Vagina (tissue), 2 donors: ENCODE measurements at regions of chr7 and their contacts with region 1.

Region 1: DNA sequence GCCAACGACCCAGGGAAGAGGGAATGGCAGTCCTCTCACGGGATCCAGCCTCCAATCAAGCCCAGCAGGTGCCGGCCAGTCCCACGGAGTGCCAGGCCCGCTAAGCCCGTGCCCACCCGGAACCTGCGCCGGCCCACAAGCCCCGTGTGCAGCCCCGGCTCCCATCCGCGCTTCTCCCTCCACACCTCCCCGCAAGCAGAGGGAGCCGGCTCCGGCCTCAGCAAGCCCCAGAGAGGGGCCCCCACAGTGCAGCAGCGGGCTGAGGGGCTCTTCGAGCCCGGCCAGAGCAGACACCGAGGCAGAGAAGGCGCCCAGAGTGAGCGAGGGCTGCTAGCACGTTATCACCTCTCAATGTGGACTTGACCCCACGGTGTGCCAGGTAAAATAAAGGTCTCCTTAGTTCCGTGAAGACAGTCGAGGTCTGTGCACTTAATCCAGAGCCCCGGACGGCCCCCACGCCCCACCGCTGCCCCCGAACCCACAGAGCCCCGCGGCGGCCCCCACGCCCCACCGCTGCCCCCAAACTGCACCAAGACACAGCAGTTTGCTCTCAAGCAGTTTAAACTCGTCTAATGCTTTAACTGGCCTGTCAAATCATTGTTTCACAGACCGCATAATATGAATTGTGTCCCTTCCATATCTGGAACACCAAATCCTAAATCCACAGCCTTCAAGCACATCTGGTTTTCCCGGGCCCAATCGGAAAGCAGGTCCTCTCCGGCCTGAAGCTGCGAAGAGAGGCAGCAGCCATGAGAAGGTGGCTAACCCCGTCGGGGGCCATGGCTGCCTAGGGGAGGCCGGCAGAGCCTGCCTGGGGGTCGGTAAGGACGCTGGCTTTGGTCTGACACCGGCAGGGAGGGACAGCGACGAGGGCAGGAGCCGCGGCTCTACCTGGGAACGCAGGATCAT is 307.8 kb downstream of the PTPRN2 start:
- DNase-seq: no peak
- H3K4me3 ChIP-seq: no peak overlapping the region
- H3K27ac ChIP-seq: no peak overlapping the region
- H3K4me1 ChIP-seq: no peaks in the 10 kb centered on the region
- H3K27me3 ChIP-seq: no peaks in the 10 kb centered on the region
- CTCF ChIP-seq: no peak
- POLR2A ChIP-seq: no peak

Region 2: DNA sequence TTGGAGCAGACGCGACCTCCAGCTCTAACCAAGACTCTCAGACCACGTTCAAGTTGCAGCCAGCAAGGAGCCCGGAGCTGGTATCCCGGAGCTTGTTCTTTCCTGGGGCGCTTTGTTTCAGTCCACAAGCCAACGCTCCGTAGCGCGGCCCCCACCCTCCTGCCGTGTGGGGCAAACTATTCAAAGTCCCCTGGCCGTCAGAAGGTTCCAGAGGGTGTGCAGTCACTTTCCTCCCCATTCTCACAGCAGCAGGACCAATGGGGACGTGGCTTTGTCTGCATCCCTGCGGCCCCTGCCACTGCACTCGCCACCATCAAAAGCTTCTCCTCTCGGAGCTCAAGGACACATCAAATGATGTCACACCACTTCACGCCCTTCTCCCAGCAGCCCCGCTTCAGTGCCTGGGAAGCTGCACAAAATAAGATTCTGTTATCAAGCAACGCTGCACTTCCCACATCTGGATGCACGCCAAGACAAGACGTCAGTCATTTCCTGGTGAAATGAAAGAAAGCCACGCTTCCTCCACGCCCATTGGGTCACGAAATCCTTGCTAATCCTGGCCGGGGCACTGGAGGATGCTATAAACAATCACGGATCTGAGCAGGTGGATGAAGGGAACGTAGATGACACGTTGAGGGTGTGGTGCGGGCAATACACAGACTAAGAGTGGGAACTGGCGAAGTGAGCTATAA is 40.4 kb before region 1 on chr7:
- intact Hi-C with region 1: no loop called
- DNase-seq: no peak
- H3K4me3 ChIP-seq: no peak overlapping the region
- H3K27ac ChIP-seq: no peak overlapping the region
- H3K4me1 ChIP-seq: no peaks in the 10 kb centered on the region
- H3K27me3 ChIP-seq: no peaks in the 10 kb centered on the region
- CTCF ChIP-seq: no peak
- POLR2A ChIP-seq: no peak

Region 3: GRCh38 chr7:158252072-158252836 is 27.5 kb before region 1 on chr7:
- intact Hi-C with region 1: no loop called
- DNase-seq: peak in 1 of 2 donors; percentile 95
- H3K4me3 ChIP-seq: no peak overlapping the region
- H3K27ac ChIP-seq: no peak overlapping the region
- H3K4me1 ChIP-seq: no peaks in the 10 kb centered on the region
- H3K27me3 ChIP-seq: no peaks in the 10 kb centered on the region
- CTCF ChIP-seq: no peak
- POLR2A ChIP-seq: no peak

Region 4: DNA sequence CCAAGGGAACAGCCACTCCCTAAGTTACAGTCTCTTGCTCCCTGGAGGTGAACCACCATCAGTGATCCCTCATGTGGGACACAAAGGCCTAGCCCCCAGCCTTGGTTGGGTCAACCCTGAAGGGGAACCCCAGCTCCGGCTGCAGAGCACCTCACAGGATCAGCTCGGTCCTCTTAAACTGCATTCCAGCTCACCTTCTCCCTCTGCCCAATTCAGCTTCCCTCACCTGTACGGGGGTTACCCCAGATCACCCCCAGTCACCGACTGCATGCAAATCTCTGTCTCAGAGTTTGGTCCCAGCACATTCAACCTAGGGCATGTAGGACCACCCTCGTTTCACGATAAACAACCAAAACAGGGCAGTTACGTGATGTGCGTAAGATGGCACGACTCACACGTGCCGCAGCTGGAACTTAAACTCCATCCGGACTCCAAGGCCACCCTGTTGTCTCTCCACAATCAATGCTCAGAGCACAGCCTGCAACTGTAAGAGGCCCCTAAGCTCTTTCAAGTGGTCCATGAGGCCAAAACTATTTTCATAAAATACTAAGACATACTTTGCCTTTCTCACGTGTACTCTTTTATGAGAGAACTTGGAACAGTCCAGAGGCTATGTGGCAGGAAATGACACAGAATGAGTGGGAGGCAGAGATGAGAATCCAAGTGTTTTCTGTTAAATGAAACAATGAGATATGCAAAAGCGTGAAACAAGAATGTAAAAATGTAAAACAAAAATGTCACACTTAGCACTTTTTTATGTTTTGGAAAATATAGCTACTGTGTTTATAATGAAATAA is 22.7 kb after region 1 on chr7:
- intact Hi-C with region 1: loop called (anchors 2 kb)
- DNase-seq: peak; percentile 76 to 85
- H3K4me3 ChIP-seq: no peak overlapping the region
- H3K27ac ChIP-seq: no peak overlapping the region
- H3K4me1 ChIP-seq: no peaks in the 10 kb centered on the region
- H3K27me3 ChIP-seq: no peaks in the 10 kb centered on the region
- CTCF ChIP-seq: no peak
- POLR2A ChIP-seq: no peak

Region 5: DNA sequence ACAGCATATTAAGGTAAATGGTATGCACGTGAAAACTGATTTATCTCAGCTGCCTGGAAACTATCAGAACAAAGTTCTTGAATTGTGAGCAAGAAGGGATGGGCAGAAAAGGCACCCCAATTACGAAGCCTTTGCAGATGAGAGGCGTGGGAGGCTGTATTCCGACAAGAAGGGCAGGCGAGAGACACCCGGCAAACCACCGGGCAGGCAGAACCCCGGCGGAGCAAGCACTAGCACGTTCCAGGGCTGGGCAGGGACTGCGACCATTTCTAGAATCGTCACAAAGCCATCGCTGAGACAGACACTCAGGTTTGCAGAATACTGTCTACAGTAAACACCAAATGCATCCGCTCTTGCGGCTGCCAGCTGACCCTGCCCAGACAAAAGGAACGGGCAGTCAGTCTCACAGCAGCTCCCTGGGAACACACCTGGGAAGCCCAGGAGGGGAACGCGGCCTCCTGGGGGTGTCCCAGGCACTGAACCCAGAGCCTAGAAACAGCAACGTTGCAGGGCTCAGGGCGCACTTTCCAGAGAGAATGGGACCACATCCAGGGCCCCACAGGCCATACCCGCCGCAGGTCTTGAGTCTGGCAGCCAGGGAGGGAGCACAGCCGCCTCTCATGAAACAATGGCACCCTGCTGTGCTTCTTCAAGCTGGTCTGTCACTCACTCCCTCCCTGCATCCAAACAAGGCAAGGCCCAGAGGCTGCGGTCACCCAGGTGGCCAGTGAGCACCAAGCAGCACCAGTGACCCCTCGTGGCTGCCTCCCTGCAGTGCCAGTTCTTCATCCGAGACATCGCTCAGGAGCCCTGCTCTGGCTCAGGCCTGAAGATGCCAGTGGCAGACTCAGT is 46.0 kb after region 1 on chr7:
- intact Hi-C with region 1: no loop called
- DNase-seq: peak; percentile 64 to 87
- H3K4me3 ChIP-seq: no peak overlapping the region
- H3K27ac ChIP-seq: no peak overlapping the region
- H3K4me1 ChIP-seq: no peaks in the 10 kb centered on the region
- H3K27me3 ChIP-seq: peaks cover 4% of the 10 kb centered on the region
- CTCF ChIP-seq: no peak
- POLR2A ChIP-seq: no peak